ENCODE measurements at regions of chr12 and their contacts with region 1.

Region 1: GRCh38 chr12:17642340-17642650 is 447.7 kb downstream of the RERGL start:
- DNase-seq: no peak
- H3K4me3 ChIP-seq: peak overlapping the region in 42 of 59 donors; percentile 7 to 61 (median 41)
- H3K27ac ChIP-seq: peak overlapping the region in 1 of 59 donors; percentile 18
- H3K27me3 ChIP-seq: no peaks in the 10 kb centered on the region
- CTCF ChIP-seq: peak in 8 of 56 donors; percentile 1 to 42 (median 12)

Region 2: DNA sequence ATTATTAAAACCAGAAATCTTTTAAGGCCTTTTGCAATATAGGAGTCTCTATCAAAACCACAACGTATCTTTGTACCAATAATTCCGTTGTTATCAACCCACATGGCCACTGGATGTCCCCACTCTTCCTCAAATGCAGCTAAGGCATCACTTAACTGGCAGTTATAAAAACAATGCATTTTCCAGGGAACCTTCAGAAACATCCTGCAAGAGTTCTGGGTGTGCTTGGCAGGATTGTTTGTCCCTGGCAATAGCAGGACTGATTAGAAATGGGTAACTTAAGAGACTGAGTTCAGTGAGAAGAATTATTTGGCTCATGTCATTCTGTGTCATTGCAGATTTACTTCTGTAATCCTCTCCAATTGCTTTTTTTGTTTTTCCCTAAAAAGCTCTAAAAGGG is 1476.8 kb before region 1 on chr12:
- intact Hi-C with region 1: loop called in 1 of 2 experiments (anchors 10 kb)
- DNase-seq: peak in 3 of 10 donors; percentile 12 to 46 (median 28)
- H3K4me3 ChIP-seq: no peak overlapping the region
- H3K27ac ChIP-seq: peak overlapping the region in 6 of 59 donors; percentile 12 to 76 (median 52)
- H3K27me3 ChIP-seq: no peaks in the 10 kb centered on the region
- CTCF ChIP-seq: peak in 50 of 56 donors; percentile 10 to 62 (median 40)

Region 3: GRCh38 chr12:16385782-16386646 is 1256.3 kb before region 1 on chr12:
- intact Hi-C with region 1: loop called (anchors 2 to 5 kb)
- DNase-seq: peak in 7 of 10 donors; percentile 14 to 58 (median 39)
- H3K4me3 ChIP-seq: peak overlapping the region in 29 of 59 donors; percentile 2 to 45 (median 30)
- H3K27ac ChIP-seq: no peak overlapping the region
- H3K27me3 ChIP-seq: peaks cover 0 to 4% (median 0%) of the 10 kb centered on the region in 45 donors
- CTCF ChIP-seq: peak; percentile 23 to 80 (median 60)

Region 4: GRCh38 chr12:17062267-17063036 is 579.8 kb before region 1 on chr12:
- intact Hi-C with region 1: no loop called
- DNase-seq: no peak
- H3K4me3 ChIP-seq: no peak overlapping the region
- H3K27ac ChIP-seq: peak overlapping the region in 1 of 59 donors; percentile 5
- H3K27me3 ChIP-seq: no peaks in the 10 kb centered on the region
- CTCF ChIP-seq: no peak

Region 5: DNA sequence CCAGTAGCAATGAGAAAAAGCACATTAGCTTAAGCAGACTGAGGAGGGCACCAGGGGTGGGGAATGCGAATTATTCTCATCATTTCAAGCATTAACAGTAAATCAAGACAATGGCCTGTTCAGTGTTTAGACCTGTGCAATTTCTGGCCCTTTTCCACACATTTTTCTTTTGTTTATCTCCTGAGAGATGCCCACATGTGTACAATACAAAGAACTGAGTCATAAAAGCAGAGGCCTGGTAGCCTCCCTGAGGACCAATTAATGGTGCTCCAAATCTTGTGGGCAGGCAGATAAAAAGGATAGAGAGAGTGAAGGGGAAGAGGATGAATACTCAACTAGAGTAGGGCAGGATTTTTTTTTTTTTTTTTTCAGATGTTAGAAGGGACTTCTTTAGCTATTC is 33.1 kb before region 1 on chr12:
- intact Hi-C with region 1: no loop called
- DNase-seq: no peak
- H3K4me3 ChIP-seq: no peak overlapping the region
- H3K27ac ChIP-seq: no peak overlapping the region
- H3K27me3 ChIP-seq: no peaks in the 10 kb centered on the region
- CTCF ChIP-seq: no peak

Measured in dorsolateral prefrontal cortex (tissue), 120 donors.